AG04449 (cell line): ENCODE measurements at regions of chr4 and their contacts with region 1.

Region 1: DNA sequence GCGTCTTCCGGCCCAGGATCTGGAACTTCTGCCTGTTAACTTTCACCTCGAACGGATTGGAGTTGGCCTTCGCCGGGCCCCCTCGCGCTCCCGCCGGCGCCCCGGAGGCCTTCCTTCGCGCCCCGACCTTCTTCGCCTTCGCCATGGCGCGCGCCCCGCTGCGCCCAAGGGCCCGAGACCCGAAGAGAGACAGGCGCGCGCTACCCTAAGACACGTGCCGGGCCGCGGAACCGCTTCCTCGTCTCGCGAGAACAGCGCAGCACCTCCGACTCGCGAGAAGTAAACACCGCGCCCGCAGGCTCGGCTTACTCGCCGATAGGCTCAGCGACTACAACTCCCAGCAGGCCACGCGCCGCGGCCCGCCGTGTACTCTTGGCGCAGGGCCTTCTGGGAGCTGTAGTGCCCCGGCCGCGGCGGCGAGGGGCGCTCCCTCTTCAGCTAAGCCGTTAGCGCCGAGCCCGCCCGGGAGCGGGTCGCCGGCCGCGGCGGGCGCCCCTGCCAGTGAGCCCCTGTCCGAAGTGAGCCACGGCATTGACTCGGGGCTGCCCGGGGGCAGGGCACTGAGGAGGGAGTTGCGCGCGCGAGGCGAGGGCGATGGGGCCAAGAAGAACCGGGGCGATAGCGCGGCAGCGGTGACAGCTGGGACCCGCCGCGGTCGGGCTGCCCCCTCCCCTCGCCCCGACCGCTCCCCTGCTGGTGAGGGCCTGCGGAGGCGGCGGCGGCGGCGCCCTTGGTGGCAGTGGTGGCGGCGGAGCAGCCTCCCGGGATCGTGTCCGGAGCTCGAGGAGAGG is at the starts of genes GRK4 and NOP14:
- DNase-seq: peak; percentile 86
- H3K4me3 ChIP-seq: peak within 1 kb of the TSS; percentile 89
- CTCF ChIP-seq: peak; percentile 48

Region 2: GRCh38 chr4:2934813-2935761 is 28.3 kb before region 1 on chr4:
- CTCF ChIA-PET with region 1: interaction called, 3 read pairs
- POLR2A ChIA-PET with region 1: interaction called, 15 read pairs
- DNase-seq: no peak
- H3K4me3 ChIP-seq: peak overlapping the region; percentile 89
- CTCF ChIP-seq: no peak

Region 3: GRCh38 chr4:2948895-2949765 is 14.2 kb before region 1 on chr4:
- CTCF ChIA-PET with region 1: interaction called, 14 read pairs
- POLR2A ChIA-PET with region 1: interaction called, 5 read pairs
- DNase-seq: no peak
- H3K4me3 ChIP-seq: no peak overlapping the region
- CTCF ChIP-seq: peak; percentile 63

Region 4: DNA sequence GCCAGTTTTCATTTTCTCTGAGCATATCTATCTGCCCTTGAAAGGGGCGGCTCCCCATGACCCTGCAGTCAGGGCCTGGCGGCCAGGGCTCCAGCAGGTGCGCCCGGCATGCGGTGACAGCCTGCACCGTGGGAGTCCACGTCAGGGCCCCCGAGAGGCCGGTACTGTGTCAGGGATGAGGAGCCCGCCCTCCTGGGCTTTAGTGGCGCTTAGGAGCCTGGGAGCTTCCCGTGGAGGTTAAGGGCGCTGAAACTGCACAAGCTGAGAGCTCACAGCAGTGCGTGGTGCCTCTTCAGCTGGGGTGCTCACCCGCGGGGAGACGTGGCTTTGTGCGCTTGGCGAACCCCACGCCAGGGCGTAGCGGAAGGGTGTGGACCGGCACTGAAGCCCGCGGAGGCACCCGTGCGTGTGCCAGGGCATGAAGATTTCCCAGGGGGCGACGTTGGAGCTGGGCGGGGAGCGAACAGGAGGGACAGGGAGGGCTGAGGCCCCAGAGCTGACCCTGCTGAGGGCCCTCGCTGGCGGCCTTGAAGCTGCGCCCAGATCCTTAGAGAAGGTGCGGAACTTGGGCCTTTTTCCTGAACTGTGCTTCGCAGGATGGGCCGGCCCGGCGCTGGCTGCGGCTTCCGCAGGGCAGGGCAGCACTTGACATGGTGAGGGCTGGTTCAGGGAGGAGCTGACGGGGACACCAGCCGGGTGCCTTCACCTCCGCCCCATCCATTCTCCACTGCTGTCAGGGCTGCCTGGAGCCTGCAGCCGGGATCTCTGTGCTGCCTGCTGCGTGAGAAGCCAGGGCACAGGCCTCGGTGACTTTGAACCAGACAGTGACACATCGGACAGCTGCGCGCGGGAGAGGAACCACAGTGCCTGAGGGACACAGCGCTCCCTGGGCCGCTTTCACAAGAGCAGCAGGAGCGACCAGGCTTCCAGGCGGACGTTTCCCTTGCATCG is 78.1 kb after region 1 on chr4:
- CTCF ChIA-PET with region 1: interaction called, 14 read pairs
- POLR2A ChIA-PET with region 1: no interaction called
- DNase-seq: no peak
- H3K4me3 ChIP-seq: peak overlapping the region; percentile 39
- CTCF ChIP-seq: no peak